Panc1 (cell line): ENCODE measurements at regions of chr1 and their contacts with region 1.

Region 1: DNA sequence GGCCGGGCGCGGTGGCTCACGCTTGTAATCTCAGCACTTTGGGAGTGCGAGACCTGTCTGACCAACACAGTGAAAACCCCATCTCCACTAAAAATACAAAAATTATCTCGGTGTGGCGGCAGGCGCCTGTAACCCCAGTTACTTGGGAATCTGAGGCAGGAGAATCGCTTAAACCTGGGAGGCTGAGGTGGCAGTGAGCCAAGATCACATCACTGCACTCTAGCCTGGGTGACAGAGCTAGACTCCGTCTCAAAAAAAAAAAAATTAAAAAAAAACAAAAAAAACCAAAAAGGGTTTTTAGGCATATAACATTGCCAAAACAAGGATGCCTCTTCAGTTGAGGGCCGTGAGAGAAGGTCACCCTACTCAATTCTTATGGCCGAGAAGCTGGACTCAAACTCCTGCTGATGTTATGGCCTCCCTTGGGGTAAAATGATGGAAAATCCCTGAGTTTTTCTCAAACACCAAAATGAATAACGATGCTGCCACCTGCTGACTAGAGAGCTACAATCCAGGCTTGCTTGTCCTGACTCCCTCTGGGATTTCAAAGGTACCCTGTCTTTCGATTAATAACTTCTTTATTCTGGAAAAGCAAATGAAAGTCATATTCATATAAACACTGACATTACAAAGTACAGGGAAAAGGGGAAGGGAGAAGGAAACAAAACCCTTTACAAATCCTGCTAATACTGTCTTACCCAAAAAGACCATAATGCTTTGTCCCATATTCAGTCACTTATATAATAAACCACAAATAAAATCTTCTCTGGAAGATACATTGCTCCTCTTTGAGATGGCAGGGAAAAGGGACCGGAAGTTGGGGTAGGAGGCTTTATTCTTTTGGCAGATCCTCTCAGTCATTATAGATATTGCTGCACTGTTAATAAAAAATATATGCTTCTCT is 10.7 kb downstream of the RAB42 start:
- DNase-seq: peak; percentile 43
- ATAC-seq: peak; percentile 61
- H3K4me3 ChIP-seq: no peak overlapping the region
- H3K27ac ChIP-seq: no peak overlapping the region
- H3K4me1 ChIP-seq: peaks cover 8% of the 10 kb centered on the region
- H3K27me3 ChIP-seq: no peaks in the 10 kb centered on the region
- CTCF ChIP-seq: no peak

Region 2: DNA sequence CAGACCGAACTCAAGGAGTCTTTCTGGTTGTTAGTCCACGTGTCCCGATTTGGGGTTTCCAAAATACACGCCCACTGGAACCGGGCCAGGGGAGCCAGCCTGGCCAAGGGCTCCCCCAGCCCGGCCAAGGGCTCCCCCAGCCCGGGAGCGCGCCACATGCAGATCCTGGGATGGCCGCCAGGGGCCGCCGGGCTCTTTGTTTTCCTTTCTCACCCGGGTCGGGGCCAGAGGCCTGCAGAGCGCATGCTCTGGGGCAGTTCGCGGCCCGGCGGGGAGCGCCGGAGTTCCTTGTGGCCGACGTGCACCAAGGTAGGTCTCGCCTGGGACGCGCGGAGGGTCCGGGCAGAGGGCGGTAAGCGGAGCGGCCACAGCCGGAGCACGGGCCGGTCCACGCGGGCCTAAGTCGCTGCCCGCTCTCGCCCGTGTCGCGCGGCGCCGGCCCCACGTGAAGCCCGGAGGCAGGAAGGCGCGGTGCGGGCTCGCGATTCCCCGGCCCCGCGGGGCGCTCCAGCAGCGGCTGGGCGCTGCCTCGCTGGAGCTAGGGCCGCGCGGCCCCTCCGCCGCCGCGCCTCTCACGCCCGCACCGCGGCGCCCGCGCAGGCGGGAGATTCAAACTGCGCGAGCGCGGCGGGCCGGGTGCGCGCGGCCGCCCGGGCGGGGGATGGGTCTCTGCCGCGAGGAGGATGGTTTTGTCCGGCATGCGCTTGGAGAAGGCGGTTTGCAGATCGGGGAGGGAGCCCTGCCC is 84.6 kb before region 1 on chr1:
- CTCF ChIA-PET with region 1: interaction called, 3 read pairs
- POLR2A ChIA-PET with region 1: interaction called, 5 read pairs
- in situ Hi-C with region 1: no loop called
- intact Hi-C with region 1: loop called (anchors 5 kb)
- DNase-seq: no peak
- ATAC-seq: peak; percentile 72
- H3K4me3 ChIP-seq: peak overlapping the region; percentile 60 to 69
- H3K27ac ChIP-seq: peak overlapping the region; percentile 92
- H3K4me1 ChIP-seq: peaks cover 11% of the 10 kb centered on the region
- H3K27me3 ChIP-seq: no peaks in the 10 kb centered on the region
- CTCF ChIP-seq: peak; percentile 99